Mammary epithelial cell (primary cell): ENCODE measurements at regions of chr3 and their contacts with region 1.

Region 1: DNA sequence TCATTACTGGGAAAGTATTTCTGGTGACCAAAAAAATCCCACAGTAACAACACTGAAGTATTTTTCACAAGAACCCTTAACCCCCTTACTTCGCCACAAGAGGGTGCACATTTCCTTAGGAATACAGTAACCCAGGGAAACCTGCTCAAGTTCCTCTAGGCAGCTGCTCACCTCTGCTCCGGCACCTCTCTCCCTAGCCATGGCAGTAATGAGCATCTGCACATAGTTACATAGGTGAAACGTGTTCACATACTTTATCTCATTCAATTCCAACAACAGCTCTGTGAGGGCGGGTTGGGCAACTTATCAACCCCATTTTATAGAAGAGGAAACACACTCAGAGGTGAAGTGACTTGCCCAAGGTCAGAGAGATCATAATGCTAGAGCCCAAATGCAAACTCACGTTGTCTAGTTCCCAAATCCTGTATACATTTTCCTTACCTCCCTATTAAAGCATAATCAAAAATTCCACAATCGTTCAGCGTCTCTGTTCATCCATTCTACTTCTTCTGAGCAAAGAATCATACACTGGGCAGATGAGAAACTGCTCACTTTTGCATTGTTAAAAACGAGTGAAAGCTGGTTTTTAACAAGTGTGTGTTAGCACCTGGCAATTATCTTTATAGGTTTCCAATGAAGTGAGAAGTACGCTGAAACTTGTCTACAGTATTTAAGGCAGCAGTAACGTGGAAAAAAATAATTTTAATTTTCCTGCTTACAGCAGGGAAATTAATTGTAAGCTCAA is 90.7 kb downstream of the IGF2BP2 start:
- DNase-seq: peak; percentile 80
- H3K4me3 ChIP-seq: no peak overlapping the region
- H3K27ac ChIP-seq: peak overlapping the region; percentile 99
- H3K4me1 ChIP-seq: peaks cover 76% of the 10 kb centered on the region
- H3K27me3 ChIP-seq: no peaks in the 10 kb centered on the region
- CTCF ChIP-seq: peak; percentile 77 to 80

Region 2: GRCh38 chr3:185659942-185660921 is 73.9 kb before region 1 on chr3:
- CTCF ChIA-PET with region 1: no interaction called
- dilution Hi-C with region 1: no loop called
- in situ Hi-C with region 1: no loop called
- intact Hi-C with region 1: loop called (anchors 1 kb)
- DNase-seq: peak; percentile 62
- H3K4me3 ChIP-seq: no peak overlapping the region
- H3K27ac ChIP-seq: peak overlapping the region; percentile 48
- H3K4me1 ChIP-seq: peaks cover 60% of the 10 kb centered on the region
- H3K27me3 ChIP-seq: no peaks in the 10 kb centered on the region
- CTCF ChIP-seq: peak; percentile 98 to 99

Region 3: DNA sequence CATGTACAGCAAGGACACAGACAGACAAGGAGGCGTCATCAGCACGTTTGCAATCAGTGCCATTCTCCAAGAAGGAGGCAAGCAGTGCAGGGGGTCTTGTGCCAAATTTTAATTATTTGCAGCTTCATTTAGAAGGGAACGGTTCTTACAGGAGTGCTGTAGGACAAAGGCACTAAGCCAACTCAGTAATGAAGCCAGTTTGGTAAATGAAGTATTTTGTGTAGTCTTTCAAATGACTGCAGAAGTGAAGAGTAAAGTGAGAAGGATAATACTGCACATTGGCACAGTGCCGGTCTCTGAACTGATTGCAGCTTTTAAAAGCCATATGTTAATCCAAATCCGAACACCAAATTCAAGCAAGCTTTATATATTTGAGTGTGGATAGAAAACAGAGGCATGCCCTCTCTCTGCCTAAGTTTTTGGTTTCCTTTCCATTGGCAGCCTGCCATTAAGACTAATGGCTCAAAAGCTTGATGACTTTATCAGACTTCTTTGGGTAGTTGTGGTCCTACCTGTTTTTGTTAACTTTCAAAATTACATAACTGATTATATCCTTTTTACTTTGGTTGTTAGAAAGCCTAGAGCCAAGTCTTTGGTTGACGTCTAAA is 46.8 kb before region 1 on chr3:
- CTCF ChIA-PET with region 1: no interaction called
- dilution Hi-C with region 1: no loop called
- in situ Hi-C with region 1: no loop called
- intact Hi-C with region 1: loop called (anchors 1 kb)
- DNase-seq: peak; percentile 48
- H3K4me3 ChIP-seq: no peak overlapping the region
- H3K27ac ChIP-seq: peak overlapping the region; percentile 90
- H3K4me1 ChIP-seq: peaks cover 23% of the 10 kb centered on the region
- H3K27me3 ChIP-seq: no peaks in the 10 kb centered on the region
- CTCF ChIP-seq: no peak

Region 4: DNA sequence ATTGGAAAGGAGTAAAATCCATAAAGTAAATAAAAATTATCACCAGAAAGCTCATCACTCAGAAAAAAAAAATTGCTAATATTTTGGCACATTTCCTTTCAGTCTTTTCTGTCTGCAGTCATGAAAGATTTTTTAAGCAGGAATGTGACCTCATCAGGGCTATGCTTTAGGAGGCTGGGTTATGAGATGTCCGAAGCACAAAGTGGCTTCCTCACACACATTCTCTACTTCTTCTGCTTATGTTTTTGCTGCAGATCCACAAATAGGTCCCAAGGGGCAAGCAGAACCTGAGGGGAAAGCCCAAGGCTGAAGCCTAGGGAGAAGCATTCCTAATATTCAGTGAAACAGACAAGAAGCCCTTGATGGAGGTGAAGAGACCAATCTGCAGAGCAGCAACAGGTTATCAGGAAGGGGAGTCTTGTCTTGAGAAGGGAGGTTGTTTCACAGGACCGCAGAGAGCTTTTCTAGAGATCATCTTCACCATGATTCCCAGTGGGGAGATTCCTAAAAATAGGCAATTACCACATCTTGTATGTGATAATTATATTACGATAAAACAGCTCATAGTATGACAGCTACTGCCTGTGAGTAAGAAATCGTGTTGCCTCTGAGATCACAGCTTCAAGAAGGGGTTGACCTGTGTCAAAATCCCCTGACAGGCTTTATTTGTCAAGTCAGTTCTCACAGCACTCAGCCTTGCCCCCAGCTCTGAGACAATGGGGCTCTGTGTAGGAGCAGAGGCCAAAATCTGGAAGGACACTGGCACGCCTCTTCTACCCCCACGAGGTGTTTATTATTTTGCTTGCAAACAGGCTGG is 30.2 kb after region 1 on chr3:
- CTCF ChIA-PET with region 1: interaction called, 3 read pairs
- dilution Hi-C with region 1: no loop called
- in situ Hi-C with region 1: no loop called
- intact Hi-C with region 1: loop called (anchors 1 kb)
- DNase-seq: peak; percentile 61
- H3K4me3 ChIP-seq: no peak overlapping the region
- H3K27ac ChIP-seq: peak overlapping the region; percentile 0
- H3K4me1 ChIP-seq: peaks cover 58% of the 10 kb centered on the region
- H3K27me3 ChIP-seq: no peaks in the 10 kb centered on the region
- CTCF ChIP-seq: no peak

Region 5: GRCh38 chr3:185779461-185779860 is 45.3 kb after region 1 on chr3:
- CTCF ChIA-PET with region 1: no interaction called
- dilution Hi-C with region 1: loop called (anchors 5 kb)
- in situ Hi-C with region 1: no loop called
- intact Hi-C with region 1: no loop called
- DNase-seq: no peak
- H3K4me3 ChIP-seq: no peak overlapping the region
- H3K27ac ChIP-seq: no peak overlapping the region
- H3K4me1 ChIP-seq: peaks cover 33% of the 10 kb centered on the region
- H3K27me3 ChIP-seq: no peaks in the 10 kb centered on the region
- CTCF ChIP-seq: no peak

Region 6: GRCh38 chr3:185937689-185938463 is 203.7 kb after region 1 on chr3 and contains the start of gene TRA2B:
- CTCF ChIA-PET with region 1: no interaction called
- dilution Hi-C with region 1: no loop called
- in situ Hi-C with region 1: no loop called
- intact Hi-C with region 1: loop called (anchors 10 kb)
- DNase-seq: peak; percentile 95
- H3K4me3 ChIP-seq: peak within 1 kb of the TSS; percentile 87 to 100 (median 98)
- H3K27ac ChIP-seq: peak within 1 kb of the TSS; percentile 99
- H3K4me1 ChIP-seq: peaks cover 18% of the 10 kb centered on the region
- H3K27me3 ChIP-seq: no peaks in the 10 kb centered on the region
- CTCF ChIP-seq: no peak
- total RNA-seq, gene TRA2B: 117 to 151 TPM

Region 7: GRCh38 chr3:186067360-186068242 is 333.4 kb after region 1 on chr3:
- CTCF ChIA-PET with region 1: no interaction called
- dilution Hi-C with region 1: no loop called
- in situ Hi-C with region 1: no loop called
- intact Hi-C with region 1: no loop called
- DNase-seq: no peak
- H3K4me3 ChIP-seq: no peak overlapping the region
- H3K27ac ChIP-seq: no peak overlapping the region
- H3K4me1 ChIP-seq: no peaks in the 10 kb centered on the region
- H3K27me3 ChIP-seq: no peaks in the 10 kb centered on the region
- CTCF ChIP-seq: no peak